GM10248 (cell line): ENCODE measurements at regions of chr10 and their contacts with region 1.

Region 1: DNA sequence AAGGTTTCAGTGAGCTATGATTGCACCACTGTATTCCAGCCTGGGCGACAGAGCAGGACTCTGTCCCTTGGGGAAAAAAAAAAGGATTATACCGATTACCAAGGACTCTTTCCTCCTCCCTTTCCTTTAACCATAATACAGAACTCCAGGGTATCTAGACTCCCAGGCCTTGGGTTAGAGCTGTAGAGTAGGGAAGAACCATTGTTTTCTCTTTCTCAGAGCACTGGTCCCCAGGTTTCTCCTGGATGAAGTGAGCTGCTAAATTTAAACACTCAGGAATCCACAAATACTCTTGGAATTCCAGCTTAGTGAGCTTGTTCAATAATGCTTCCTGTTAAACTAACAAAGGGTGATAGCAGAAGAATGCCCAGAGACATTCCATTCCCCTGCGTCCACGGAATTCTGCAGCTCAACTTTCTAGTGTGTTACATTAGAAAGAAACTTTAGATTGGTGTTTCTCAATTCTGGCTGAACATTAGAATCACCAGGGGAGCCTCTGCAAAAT is 14.6 kb upstream of the RPEL1 start:
- DNase-seq: no peak
- CTCF ChIP-seq: no peak

Region 2: GRCh38 chr10:103040418-103040817 is 190.7 kb before region 1 on chr10:
- CTCF ChIA-PET with region 1: no interaction called
- POLR2A ChIA-PET with region 1: no interaction called
- DNase-seq: no peak
- CTCF ChIP-seq: no peak

Region 3: DNA sequence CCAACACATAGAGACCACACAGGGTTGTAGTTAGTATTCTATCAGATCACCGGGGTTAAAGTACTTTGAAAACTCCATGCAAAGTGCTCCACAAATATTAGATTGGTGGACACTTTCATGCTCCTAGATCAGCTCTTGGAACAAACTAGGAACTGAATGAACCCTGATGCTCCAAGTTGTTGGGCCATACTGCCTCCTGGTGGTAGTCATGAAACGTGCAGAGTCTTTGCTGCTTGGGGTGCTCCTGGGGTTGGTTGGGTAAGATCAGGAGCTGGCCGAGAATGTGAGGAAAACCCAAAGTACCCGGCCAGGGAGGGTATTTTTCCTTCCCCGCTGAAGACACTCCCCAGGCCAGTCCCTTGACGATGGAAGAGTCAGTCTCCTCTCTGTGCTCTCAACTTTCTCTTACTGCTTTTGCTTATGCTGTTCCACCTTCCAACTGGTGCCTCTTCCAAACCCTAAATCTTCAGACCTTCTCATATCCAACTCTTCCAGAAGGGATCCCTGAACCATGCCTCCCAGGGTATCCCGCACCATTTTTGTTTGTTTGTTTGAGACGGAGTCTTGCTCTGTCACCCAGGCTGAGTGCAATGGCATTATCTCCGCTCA is 13.7 kb after region 1 on chr10:
- CTCF ChIA-PET with region 1: interaction called, 22 read pairs
- POLR2A ChIA-PET with region 1: no interaction called
- DNase-seq: peak; percentile 83
- CTCF ChIP-seq: peak; percentile 94

Region 4: GRCh38 chr10:103350501-103351260 is 119.6 kb after region 1 on chr10 and contains the start of gene PCGF6:
- CTCF ChIA-PET with region 1: no interaction called
- POLR2A ChIA-PET with region 1: no interaction called
- DNase-seq: peak; percentile 95
- CTCF ChIP-seq: no peak

Region 5: GRCh38 chr10:103491493-103492381 is 260.6 kb after region 1 on chr10:
- CTCF ChIA-PET with region 1: no interaction called
- POLR2A ChIA-PET with region 1: no interaction called
- DNase-seq: no peak
- CTCF ChIP-seq: no peak

Region 6: GRCh38 chr10:104197364-104197763 is 966.3 kb after region 1 on chr10:
- CTCF ChIA-PET with region 1: no interaction called
- POLR2A ChIA-PET with region 1: no interaction called
- DNase-seq: no peak
- CTCF ChIP-seq: no peak